Endothelial cell of umbilical vein (primary cell): ENCODE measurements at regions of chr10 and their contacts with region 1.

Region 1: DNA sequence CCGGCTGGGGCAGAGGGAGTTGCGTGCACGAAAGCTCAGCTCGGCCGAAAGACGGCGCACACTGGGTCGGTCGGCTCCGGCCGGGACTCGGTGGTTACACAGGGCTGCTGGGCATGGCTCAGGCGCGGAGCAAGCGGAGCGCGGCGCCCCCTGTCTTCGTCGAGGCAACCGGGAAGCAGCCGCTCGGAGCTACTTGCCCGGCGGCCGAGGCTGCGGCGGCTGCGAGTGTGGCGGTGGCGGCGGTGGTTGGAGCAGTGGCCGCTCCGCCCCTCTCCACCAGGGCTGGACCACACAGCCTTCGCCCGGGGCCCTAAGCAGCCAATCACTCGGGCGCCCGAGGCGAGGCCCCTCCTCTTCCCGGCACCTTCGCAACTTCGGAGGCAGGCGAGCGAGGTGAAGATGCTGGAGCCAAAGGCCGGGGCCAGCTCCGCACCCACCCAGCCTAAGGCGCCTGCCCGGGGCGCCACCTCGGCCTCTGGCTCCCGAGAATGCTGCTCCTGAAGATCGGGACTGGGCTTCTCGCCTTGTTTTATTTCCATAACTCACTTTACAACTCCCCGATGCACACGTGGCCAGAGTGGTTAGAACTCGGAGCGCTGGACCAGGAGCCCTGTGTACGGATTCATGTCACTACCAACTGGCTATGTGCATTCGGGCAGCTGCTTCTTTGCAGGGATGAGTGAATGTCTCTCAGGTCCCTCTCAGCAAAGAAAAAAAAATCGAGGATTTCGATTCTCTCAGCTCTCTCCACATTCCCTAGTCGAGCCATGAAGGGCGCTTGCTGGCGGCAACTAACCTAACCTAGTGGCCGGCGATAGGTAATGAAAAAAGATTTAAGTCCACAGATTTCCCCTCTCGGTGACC is at the start of gene TLL2:
- DNase-seq: peak; percentile 94
- H3K4me3 ChIP-seq: peak within 1 kb of the TSS; percentile 21 to 47 (median 38)
- H3K27ac ChIP-seq: no peak within 1 kb of the TSS
- H3K4me1 ChIP-seq: peaks cover 20% of the 10 kb centered on the region
- H3K27me3 ChIP-seq: peaks cover 16 to 23% of the 10 kb centered on the region in 2 experiments
- CTCF ChIP-seq: peak; percentile 48 to 74
- POLR2A ChIP-seq: no peak
- total RNA-seq, gene TLL2: 0.05 and 0.20 TPM in 2 replicates

Region 2: DNA sequence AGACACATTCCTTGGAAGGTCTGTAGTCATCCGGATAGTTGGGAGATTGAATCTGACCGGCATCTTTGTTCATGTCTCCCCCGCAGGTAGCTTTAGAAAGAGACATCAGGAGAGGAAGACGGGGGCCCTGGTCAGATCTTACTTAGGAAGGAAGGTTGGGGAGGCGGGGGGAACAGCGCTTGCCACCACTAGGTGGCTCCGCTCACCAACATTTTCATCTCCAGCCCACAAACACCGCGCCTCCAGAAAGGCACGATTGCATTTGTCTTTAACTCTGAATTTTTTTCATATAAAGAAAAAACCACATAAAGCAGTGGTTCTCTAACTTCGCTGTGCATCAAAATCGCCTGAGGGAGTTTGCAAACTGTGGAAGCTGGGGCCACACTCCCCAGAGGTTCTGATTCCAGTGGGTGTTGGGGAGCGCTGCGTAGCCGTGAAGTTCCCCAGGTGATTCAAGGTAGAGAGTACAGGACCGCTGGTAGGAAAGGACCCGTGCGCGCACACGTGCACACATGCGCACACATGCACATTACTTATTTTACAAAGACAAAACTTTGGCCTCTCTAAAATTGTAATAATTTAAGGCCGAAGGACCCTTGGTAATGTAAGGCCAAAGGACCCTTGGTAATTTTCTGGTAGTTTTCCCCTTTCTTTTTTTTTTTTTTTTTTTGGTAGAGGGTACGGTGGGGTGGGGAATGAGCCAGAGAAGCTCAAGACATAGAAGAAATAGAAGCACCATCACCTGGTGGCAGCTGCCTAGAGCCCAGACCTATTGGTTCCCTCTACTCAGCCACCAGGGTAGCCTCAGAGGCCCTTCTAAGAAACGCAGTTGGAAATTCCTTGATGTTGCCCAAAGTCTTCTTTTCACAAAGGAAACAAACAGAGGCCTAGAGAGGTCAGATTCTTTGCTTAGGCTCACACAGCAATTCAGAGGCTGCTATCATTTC is 117.7 kb before region 1 on chr10:
- CTCF ChIA-PET with region 1: interaction called, 3 read pairs
- POLR2A ChIA-PET with region 1: no interaction called
- dilution Hi-C with region 1: no loop called
- intact Hi-C with region 1: loop called (anchors 1 kb)
- DNase-seq: peak; percentile 64
- H3K4me3 ChIP-seq: no peak overlapping the region
- H3K27ac ChIP-seq: no peak overlapping the region
- H3K4me1 ChIP-seq: no peaks in the 10 kb centered on the region
- H3K27me3 ChIP-seq: peaks cover 4 to 9% of the 10 kb centered on the region in 2 experiments
- CTCF ChIP-seq: peak; percentile 76 to 86
- POLR2A ChIP-seq: no peak

Region 3: GRCh38 chr10:96502561-96503282 is 11.2 kb before region 1 on chr10:
- CTCF ChIA-PET with region 1: interaction called, 19 read pairs
- POLR2A ChIA-PET with region 1: no interaction called
- dilution Hi-C with region 1: no loop called
- intact Hi-C with region 1: no loop called
- DNase-seq: no peak
- H3K4me3 ChIP-seq: no peak overlapping the region
- H3K27ac ChIP-seq: no peak overlapping the region
- H3K4me1 ChIP-seq: no peaks in the 10 kb centered on the region
- H3K27me3 ChIP-seq: no peaks in the 10 kb centered on the region
- CTCF ChIP-seq: no peak
- POLR2A ChIP-seq: no peak

Region 4: DNA sequence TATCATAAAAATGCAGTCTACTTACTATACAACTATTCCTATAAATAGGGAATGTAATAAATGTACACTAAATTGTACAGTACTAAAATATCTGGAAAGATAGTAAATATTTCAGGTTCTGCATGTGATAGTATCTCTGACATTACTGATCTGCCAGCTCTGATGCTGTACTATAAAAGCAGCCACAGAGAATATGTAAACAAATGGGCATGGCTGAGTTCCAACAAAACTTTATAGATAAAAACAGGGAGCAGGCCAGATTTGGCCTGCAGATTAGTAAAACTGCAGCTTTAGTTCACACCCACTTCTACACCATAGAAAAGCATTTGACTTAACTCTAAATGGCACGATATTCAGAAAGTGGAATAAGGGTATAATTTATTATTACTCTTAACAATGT is 18.6 kb after region 1 on chr10:
- CTCF ChIA-PET with region 1: interaction called, 10 read pairs
- POLR2A ChIA-PET with region 1: no interaction called
- dilution Hi-C with region 1: no loop called
- intact Hi-C with region 1: no loop called
- DNase-seq: peak; percentile 33
- H3K4me3 ChIP-seq: no peak overlapping the region
- H3K27ac ChIP-seq: no peak overlapping the region
- H3K4me1 ChIP-seq: no peaks in the 10 kb centered on the region
- H3K27me3 ChIP-seq: no peaks in the 10 kb centered on the region
- CTCF ChIP-seq: no peak
- POLR2A ChIP-seq: no peak

Region 5: GRCh38 chr10:96814264-96814663 is 300.3 kb after region 1 on chr10:
- CTCF ChIA-PET with region 1: no interaction called
- POLR2A ChIA-PET with region 1: no interaction called
- dilution Hi-C with region 1: no loop called
- intact Hi-C with region 1: no loop called
- DNase-seq: no peak
- H3K4me3 ChIP-seq: no peak overlapping the region
- H3K27ac ChIP-seq: no peak overlapping the region
- H3K4me1 ChIP-seq: no peaks in the 10 kb centered on the region
- H3K27me3 ChIP-seq: peaks cover 0 to 5% of the 10 kb centered on the region in 2 experiments
- CTCF ChIP-seq: no peak
- POLR2A ChIP-seq: no peak

Region 6: GRCh38 chr10:96831867-96832720 is 318.2 kb after region 1 on chr10 and contains the start of gene LCOR:
- CTCF ChIA-PET with region 1: no interaction called
- POLR2A ChIA-PET with region 1: no interaction called
- dilution Hi-C with region 1: no loop called
- intact Hi-C with region 1: loop called (anchors 10 kb)
- DNase-seq: peak; percentile 85
- H3K4me3 ChIP-seq: peak within 1 kb of the TSS; percentile 81 to 99 (median 82)
- H3K27ac ChIP-seq: peak within 1 kb of the TSS; percentile 60
- H3K4me1 ChIP-seq: peaks cover 24% of the 10 kb centered on the region
- H3K27me3 ChIP-seq: no peaks in the 10 kb centered on the region
- CTCF ChIP-seq: no peak
- POLR2A ChIP-seq: peak; percentile 87
- total RNA-seq, gene LCOR: 32.9 and 39.0 TPM in 2 replicates